Aorta (tissue), 5 donors: ENCODE measurements at regions of chr9 and their contacts with region 1.

Region 1: GRCh38 chr9:17793713-17794622 is 215.1 kb downstream of the SH3GL2 start:
- DNase-seq: no peak
- ATAC-seq: no peak
- H3K4me3 ChIP-seq: no peak overlapping the region
- H3K27ac ChIP-seq: no peak overlapping the region
- H3K4me1 ChIP-seq: no peaks in the 10 kb centered on the region
- H3K27me3 ChIP-seq: no peaks in the 10 kb centered on the region

Region 2: GRCh38 chr9:19028835-19029451 is 1235.0 kb after region 1 on chr9:
- intact Hi-C with region 1: loop called in 1 of 2 experiments (anchors 10 kb)
- DNase-seq: no peak
- ATAC-seq: peak; percentile 83
- H3K4me3 ChIP-seq: no peak overlapping the region
- H3K27ac ChIP-seq: no peak overlapping the region
- H3K4me1 ChIP-seq: no peaks in the 10 kb centered on the region
- H3K27me3 ChIP-seq: no peaks in the 10 kb centered on the region